Caco-2 (cell line): ENCODE measurements at regions of chr14 and their contacts with region 1.

Region 1: GRCh38 chr14:106831322-106831720 is 1304.9 kb downstream of the TMEM121 start:
- DNase-seq: peak in 1 of 2 experiments; percentile 56
- H3K4me3 ChIP-seq: no peak overlapping the region
- H3K4me3 Mint-ChIP-seq: no peak overlapping the region
- H3K27ac Mint-ChIP-seq: no peak overlapping the region
- H3K4me1 ChIP-seq: peaks cover 6% of the 10 kb centered on the region
- H3K4me1 Mint-ChIP-seq: peaks cover 6% of the 10 kb centered on the region
- H3K27me3 ChIP-seq: no peaks in the 10 kb centered on the region
- H3K27me3 Mint-ChIP-seq: no peaks in the 10 kb centered on the region
- CTCF ChIP-seq: peak; percentile 64 to 70

Region 2: GRCh38 chr14:106790189-106791036 is 40.9 kb before region 1 on chr14:
- CTCF ChIA-PET with region 1: no interaction called
- POLR2A ChIA-PET with region 1: no interaction called
- intact Hi-C with region 1: no loop called
- DNase-seq: peak; percentile 86 to 90
- H3K4me3 ChIP-seq: no peak overlapping the region
- H3K4me3 Mint-ChIP-seq: no peak overlapping the region
- H3K27ac Mint-ChIP-seq: no peak overlapping the region
- H3K4me1 ChIP-seq: no peaks in the 10 kb centered on the region
- H3K4me1 Mint-ChIP-seq: no peaks in the 10 kb centered on the region
- H3K27me3 ChIP-seq: no peaks in the 10 kb centered on the region
- H3K27me3 Mint-ChIP-seq: peaks cover 7% of the 10 kb centered on the region
- CTCF ChIP-seq: peak; percentile 71 to 84

Region 3: GRCh38 chr14:106802423-106803364 is 28.6 kb before region 1 on chr14:
- CTCF ChIA-PET with region 1: interaction called, 19 read pairs
- POLR2A ChIA-PET with region 1: no interaction called
- intact Hi-C with region 1: no loop called
- DNase-seq: peak; percentile 74 to 84
- H3K4me3 ChIP-seq: peak overlapping the region; percentile 33
- H3K4me3 Mint-ChIP-seq: peak overlapping the region; percentile 68
- H3K27ac Mint-ChIP-seq: no peak overlapping the region
- H3K4me1 ChIP-seq: no peaks in the 10 kb centered on the region
- H3K4me1 Mint-ChIP-seq: no peaks in the 10 kb centered on the region
- H3K27me3 ChIP-seq: no peaks in the 10 kb centered on the region; the same call in 1 of the 2 replicates
- H3K27me3 Mint-ChIP-seq: peaks cover 10% of the 10 kb centered on the region
- CTCF ChIP-seq: peak; percentile 74 to 81

Region 4: DNA sequence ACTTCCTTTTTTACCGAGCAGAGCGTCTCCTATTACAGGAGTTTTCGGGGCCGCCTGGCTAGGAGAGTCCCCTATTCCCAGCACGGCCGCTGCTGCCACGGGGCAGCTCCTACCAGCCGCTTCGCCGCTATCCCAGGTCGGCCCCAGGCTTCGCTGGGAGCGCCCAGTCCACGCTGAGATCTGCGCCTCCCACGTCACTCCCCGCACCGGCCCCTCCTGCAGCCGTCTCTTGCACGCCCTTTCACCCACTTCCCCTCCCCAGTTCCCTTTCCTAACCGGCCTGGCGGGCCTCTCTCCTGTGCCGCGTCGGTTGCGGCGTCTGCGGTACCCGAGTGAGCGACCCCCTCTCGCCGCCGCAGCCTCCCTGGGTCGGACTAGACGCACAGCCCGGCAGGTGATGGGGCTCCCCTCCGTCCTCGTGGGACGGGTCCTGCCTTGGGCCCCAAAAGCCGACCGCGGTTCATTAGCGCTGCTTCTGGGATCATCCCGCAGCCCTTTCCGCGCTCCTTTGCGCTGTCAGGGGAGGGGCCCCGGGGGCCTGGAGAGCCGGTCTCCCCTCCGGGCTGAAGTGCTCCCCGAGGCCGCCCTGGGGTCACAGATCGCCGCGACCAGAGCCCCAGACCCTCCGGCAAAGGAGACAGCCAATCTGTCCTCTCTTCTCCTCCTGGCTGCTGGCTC is 13.4 kb after region 1 on chr14:
- CTCF ChIA-PET with region 1: interaction called, 24 read pairs
- POLR2A ChIA-PET with region 1: no interaction called
- intact Hi-C with region 1: no loop called
- DNase-seq: peak; percentile 55 to 76
- H3K4me3 ChIP-seq: peak overlapping the region; percentile 53
- H3K4me3 Mint-ChIP-seq: peak overlapping the region; percentile 96
- H3K27ac Mint-ChIP-seq: peak overlapping the region; percentile 80
- H3K4me1 ChIP-seq: peaks cover 26% of the 10 kb centered on the region
- H3K4me1 Mint-ChIP-seq: peaks cover 39% of the 10 kb centered on the region
- H3K27me3 ChIP-seq: no peaks in the 10 kb centered on the region
- H3K27me3 Mint-ChIP-seq: no peaks in the 10 kb centered on the region
- CTCF ChIP-seq: no peak

Region 5: DNA sequence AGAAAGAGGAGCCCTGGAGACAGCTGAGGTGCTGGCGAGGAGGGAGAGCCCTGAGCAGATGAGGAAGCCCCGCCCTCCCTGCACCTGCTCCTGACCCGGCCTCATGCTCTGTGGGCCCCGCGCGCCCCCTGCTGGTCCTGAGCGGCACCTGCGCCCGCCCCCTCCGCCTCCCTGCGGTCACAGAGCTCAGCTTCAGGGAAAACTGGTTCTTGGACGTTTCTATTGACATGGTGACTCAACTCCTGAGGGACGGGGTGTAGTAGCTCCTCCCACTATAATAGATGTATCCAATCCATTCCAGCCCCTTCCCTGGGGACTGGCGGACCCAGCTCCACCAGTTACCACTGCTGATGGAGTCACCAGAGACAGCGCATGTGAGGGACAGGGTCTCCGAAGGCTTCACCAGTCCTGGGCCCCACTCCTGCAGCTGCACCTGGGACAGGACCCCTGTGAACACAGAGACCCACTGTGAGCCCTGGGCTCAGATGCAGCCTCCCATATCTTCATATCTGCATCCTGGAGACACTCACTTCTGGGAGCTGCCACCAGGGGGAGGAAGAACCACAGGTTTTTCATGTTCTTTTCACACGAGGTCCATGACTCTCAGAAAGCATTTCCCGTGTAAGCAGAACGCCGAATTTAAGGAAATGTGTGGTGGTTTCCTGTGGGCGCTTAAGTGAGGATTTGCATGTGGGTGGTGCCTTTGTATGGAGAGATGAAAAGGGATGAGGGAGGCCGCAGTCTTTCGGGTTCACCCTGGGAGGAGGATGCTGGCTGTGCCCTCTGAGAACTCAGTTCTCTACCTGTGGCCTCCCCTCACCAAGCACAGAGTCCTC is 41.5 kb after region 1 on chr14:
- CTCF ChIA-PET with region 1: interaction called, 32 read pairs
- POLR2A ChIA-PET with region 1: no interaction called
- intact Hi-C with region 1: no loop called
- DNase-seq: peak; percentile 91 to 95
- H3K4me3 ChIP-seq: no peak overlapping the region
- H3K4me3 Mint-ChIP-seq: peak overlapping the region; percentile 62
- H3K27ac Mint-ChIP-seq: peak overlapping the region; percentile 48
- H3K4me1 ChIP-seq: peaks cover 36% of the 10 kb centered on the region
- H3K4me1 Mint-ChIP-seq: peaks cover 15% of the 10 kb centered on the region
- H3K27me3 ChIP-seq: no peaks in the 10 kb centered on the region
- H3K27me3 Mint-ChIP-seq: no peaks in the 10 kb centered on the region
- CTCF ChIP-seq: peak; percentile 59 to 90